Activated B cell treated with CpG ODN at 0.5 μM for 24 hours (primary cell): ENCODE measurements at regions of chr14 and their contacts with region 1.

Region 1: GRCh38 chr14:31286456-31287293 is 79.1 kb upstream of the HECTD1 start:
- DNase-seq: no peak
- ATAC-seq: no peak
- H3K4me3 Mint-ChIP-seq: no peak overlapping the region
- H3K27ac Mint-ChIP-seq: no peak overlapping the region
- H3K4me1 Mint-ChIP-seq: peaks cover 6% of the 10 kb centered on the region
- H3K27me3 Mint-ChIP-seq: no peaks in the 10 kb centered on the region
- CTCF ChIP-seq: no peak

Region 2: GRCh38 chr14:30915596-30915995 is 371.1 kb before region 1 on chr14:
- CTCF ChIA-PET with region 1: no interaction called
- POLR2A ChIA-PET with region 1: no interaction called
- intact Hi-C with region 1: no loop called
- DNase-seq: no peak
- ATAC-seq: no peak
- H3K4me3 Mint-ChIP-seq: no peak overlapping the region
- H3K27ac Mint-ChIP-seq: no peak overlapping the region
- H3K4me1 Mint-ChIP-seq: no peaks in the 10 kb centered on the region
- H3K27me3 Mint-ChIP-seq: no peaks in the 10 kb centered on the region
- CTCF ChIP-seq: no peak

Region 3: DNA sequence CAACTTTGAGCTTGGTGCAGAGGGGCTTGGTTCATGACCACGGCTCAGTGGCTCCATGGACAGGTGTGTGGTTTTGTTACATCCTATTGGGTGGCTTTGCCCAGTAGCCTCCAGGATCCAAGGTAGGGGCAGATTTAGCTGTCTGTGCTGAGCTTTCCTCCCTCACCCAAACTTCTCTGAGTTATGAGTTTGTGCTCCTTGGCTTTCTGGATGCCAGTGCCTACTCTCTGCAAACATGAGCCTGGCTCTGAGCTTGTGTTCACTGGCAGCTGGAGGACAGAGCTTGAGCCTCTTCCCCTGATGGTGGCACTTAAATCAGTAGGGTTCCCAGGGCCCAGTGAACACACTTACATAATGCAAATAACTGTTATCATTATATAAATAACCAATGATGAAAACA is 33.8 kb before region 1 on chr14:
- CTCF ChIA-PET with region 1: no interaction called
- POLR2A ChIA-PET with region 1: interaction called, 20 read pairs
- intact Hi-C with region 1: no loop called
- DNase-seq: no peak
- ATAC-seq: no peak
- H3K4me3 Mint-ChIP-seq: no peak overlapping the region
- H3K27ac Mint-ChIP-seq: no peak overlapping the region
- H3K4me1 Mint-ChIP-seq: no peaks in the 10 kb centered on the region
- H3K27me3 Mint-ChIP-seq: no peaks in the 10 kb centered on the region
- CTCF ChIP-seq: no peak

Region 4: GRCh38 chr14:31307198-31307597 is 20.5 kb after region 1 on chr14:
- CTCF ChIA-PET with region 1: no interaction called
- POLR2A ChIA-PET with region 1: no interaction called
- intact Hi-C with region 1: no loop called
- DNase-seq: no peak
- ATAC-seq: no peak
- H3K4me3 Mint-ChIP-seq: no peak overlapping the region
- H3K27ac Mint-ChIP-seq: no peak overlapping the region
- H3K4me1 Mint-ChIP-seq: no peaks in the 10 kb centered on the region
- H3K27me3 Mint-ChIP-seq: no peaks in the 10 kb centered on the region
- CTCF ChIP-seq: no peak